Activated CD4-positive, alpha-beta memory T cell treated with anti-CD3 and anti-CD28 coated beads for 36 hours (primary cell): ENCODE measurements at regions of chr10 and their contacts with region 1.

Region 1: DNA sequence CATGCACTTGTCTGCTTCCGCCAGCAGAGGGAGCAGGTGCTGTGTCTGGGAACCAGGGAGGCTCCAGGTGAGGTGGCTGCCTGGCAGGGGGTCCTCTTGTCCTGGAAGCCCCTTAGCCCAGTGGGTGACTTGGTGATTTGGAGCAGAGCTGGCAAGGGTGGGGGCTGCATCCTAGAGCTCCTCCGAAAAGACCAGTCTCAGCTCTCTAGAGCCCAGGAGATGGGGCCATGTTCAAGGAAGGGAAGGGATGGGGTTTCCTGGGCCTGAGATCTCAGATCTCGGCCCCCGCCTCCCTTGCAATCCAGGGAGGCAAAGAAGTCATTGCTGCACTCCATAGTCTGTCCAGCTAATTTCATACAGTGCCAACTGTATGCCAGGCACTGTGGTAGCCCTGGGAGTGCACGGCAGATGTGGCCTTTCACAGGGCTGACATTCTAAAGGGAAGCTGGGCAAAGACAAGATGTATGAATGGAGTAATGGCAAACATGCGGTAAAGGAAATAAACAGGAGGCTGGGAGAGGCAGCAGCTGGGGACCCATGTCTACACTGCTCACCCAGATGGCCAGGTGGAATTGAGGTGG is 20.4 kb upstream of the SFRP5 start:
- DNase-seq: peak; percentile 81
- H3K4me3 Mint-ChIP-seq: no peak overlapping the region
- H3K27ac Mint-ChIP-seq: no peak overlapping the region
- H3K4me1 Mint-ChIP-seq: peaks cover 18% of the 10 kb centered on the region
- H3K27me3 Mint-ChIP-seq: peaks cover 5% of the 10 kb centered on the region

Region 2: DNA sequence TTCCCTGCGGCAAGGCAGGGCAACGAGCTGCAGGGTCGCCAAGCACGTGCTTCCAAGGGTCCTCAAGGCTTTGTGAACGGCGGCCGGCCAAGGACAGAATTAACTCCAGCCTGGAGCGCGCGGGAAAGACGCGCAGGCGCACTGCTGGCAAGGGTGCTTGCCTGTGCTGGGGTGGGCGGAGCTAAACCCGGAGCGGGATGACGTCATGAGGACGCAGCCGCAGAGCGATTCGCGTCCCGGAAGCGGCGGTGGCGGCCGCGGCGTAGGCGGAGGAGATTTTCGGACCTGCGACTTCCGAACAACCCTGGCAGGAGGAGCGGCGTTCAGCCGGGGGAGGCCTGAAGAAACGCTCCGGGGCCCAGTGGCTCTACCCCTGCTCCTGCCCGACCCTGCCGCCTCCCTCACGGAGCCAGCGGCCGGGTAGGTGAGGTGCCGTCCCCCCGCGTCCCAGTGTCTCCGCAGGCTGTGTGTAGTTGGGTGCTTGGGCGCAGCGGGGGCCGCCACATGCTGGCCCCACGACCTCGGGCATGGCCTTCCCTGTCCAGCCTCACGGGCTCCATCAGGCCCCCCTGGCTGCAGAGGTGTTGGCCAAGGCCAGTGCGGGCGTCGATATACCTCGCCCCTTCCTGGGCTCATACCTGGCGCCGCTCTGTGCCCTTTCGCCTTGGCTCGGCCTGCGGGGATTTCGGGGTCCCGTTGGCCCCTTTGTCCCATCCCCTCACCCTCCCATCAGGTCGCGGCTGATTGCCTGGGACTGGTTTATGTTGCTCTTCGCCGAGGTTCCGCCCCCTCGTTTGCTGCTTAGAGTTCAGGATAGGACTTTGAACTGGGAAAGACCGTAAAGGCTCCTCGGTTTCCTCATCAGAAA is 55.1 kb before region 1 on chr10 and contains the start of gene ZFYVE27:
- CTCF ChIA-PET with region 1: no interaction called
- POLR2A ChIA-PET with region 1: no interaction called
- intact Hi-C with region 1: loop called (anchors 1 kb)
- DNase-seq: peak; percentile 98
- H3K4me3 Mint-ChIP-seq: peak within 1 kb of the TSS; percentile 95
- H3K27ac Mint-ChIP-seq: peak within 1 kb of the TSS; percentile 89
- H3K4me1 Mint-ChIP-seq: peaks cover 41% of the 10 kb centered on the region
- H3K27me3 Mint-ChIP-seq: no peaks in the 10 kb centered on the region
- total RNA-seq, gene ZFYVE27: 20.9 to 22.8 TPM

Region 3: DNA sequence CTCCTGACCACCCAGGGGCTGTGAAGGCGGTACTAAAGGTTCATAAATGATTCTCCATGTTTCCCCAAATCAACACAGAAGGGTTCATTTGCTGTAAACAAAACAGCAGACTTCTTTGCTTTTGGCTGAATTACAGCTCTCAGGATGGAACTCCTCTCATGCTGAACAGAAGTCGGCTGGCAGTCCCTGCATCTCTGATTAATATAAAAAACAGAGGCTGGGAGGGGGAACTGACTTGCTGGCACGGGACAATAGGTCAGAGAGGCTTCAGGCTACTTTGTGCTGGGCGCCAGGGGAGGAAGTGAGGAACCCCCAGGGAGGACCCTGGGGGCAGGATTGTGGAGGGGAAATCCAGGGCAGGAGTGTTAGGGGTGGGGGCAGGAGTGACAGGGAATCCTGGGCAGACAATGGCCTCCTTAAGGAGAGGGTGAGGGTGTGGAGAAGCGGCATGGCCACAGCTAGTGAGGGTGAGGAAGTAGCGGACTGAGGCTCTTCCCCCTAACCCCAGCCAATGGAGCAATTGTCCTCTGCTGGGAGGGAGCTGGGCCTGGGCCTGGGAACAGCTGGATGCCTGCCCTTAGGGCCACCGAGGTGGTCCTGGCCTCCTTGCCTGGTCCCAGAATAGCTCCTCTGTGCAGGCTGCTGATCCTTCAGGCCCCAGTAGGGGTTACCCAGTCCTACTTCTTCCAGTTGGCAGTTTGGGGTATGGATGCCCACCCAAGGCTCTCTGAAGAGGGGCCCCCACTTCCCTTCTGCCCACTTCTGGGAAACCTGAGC is 11.2 kb before region 1 on chr10:
- CTCF ChIA-PET with region 1: interaction called, 20 read pairs
- POLR2A ChIA-PET with region 1: no interaction called
- intact Hi-C with region 1: no loop called
- DNase-seq: no peak
- H3K4me3 Mint-ChIP-seq: no peak overlapping the region
- H3K27ac Mint-ChIP-seq: no peak overlapping the region
- H3K4me1 Mint-ChIP-seq: peaks cover 19% of the 10 kb centered on the region
- H3K27me3 Mint-ChIP-seq: no peaks in the 10 kb centered on the region

Region 4: DNA sequence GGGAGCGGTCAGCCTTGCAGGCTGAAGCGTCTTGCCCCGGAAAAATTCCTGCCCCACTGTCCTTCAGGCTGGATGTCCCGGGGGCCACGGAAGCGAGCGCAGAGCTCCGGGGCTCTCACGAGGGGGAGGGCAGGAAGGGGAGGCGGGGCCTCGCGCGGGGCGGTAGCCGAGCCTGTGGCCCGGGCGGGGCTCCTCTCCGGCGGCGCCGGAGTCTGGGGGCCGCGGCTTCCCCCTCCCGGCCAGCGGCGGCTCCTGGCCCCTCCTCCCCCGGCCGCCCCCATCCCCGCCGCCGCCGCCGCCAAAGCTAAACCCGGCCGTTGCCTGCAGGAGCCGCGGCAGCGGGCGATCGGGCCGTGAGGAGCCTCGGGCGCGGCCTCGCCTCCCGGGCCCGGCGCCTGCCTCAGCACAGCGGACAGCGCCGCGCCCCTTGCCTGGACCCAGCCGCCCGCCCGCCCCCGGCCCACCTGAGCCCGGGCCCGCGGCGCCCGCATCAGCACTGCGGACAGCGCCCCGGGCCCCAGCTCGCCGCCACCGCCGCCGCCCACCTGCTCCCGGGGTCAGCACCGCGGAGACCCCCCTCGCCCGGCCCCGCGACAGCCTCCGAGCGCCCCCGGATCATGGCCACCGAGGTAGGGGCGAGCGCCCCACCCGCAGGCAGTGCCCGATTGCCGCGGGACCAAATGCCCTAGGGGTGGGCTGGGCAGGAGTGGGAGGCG is 57.6 kb after region 1 on chr10 and contains the start of gene GOLGA7B:
- CTCF ChIA-PET with region 1: interaction called, 9 read pairs
- POLR2A ChIA-PET with region 1: no interaction called
- intact Hi-C with region 1: loop called (anchors 5 kb)
- DNase-seq: peak; percentile 68
- H3K4me3 Mint-ChIP-seq: peak within 1 kb of the TSS; percentile 73
- H3K27ac Mint-ChIP-seq: peak within 1 kb of the TSS; percentile 9
- H3K4me1 Mint-ChIP-seq: peaks cover 37% of the 10 kb centered on the region
- H3K27me3 Mint-ChIP-seq: no peaks in the 10 kb centered on the region
- total RNA-seq, gene GOLGA7B: 0.86 to 0.87 TPM

Region 5: GRCh38 chr10:97869091-97870042 is 77.1 kb after region 1 on chr10:
- CTCF ChIA-PET with region 1: interaction called, 246 read pairs
- POLR2A ChIA-PET with region 1: no interaction called
- intact Hi-C with region 1: loop called (anchors 1 kb)
- DNase-seq: peak; percentile 92
- H3K4me3 Mint-ChIP-seq: no peak overlapping the region
- H3K27ac Mint-ChIP-seq: no peak overlapping the region
- H3K4me1 Mint-ChIP-seq: peaks cover 12% of the 10 kb centered on the region
- H3K27me3 Mint-ChIP-seq: no peaks in the 10 kb centered on the region

Region 6: DNA sequence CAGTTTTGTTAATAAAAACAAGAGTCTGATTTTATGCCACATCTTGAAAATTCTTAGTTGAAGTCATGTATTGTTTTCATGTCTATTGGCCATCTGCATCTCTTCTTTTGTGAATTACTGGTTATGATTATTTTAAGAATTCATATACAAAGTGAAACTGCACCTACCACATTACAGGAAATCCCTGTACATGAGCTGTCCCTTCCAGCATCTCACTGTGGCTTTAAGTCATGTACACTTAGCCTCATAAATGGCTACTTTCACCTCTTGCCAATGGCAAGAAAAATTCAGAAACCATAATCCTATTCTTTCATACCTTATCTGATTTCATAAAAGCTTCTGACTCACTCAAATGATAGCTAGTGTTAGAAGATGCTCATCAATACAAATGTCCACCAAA is 189.6 kb after region 1 on chr10:
- CTCF ChIA-PET with region 1: no interaction called
- POLR2A ChIA-PET with region 1: no interaction called
- intact Hi-C with region 1: no loop called
- DNase-seq: no peak
- H3K4me3 Mint-ChIP-seq: no peak overlapping the region
- H3K27ac Mint-ChIP-seq: no peak overlapping the region
- H3K4me1 Mint-ChIP-seq: no peaks in the 10 kb centered on the region
- H3K27me3 Mint-ChIP-seq: peaks cover 35% of the 10 kb centered on the region

Region 7: DNA sequence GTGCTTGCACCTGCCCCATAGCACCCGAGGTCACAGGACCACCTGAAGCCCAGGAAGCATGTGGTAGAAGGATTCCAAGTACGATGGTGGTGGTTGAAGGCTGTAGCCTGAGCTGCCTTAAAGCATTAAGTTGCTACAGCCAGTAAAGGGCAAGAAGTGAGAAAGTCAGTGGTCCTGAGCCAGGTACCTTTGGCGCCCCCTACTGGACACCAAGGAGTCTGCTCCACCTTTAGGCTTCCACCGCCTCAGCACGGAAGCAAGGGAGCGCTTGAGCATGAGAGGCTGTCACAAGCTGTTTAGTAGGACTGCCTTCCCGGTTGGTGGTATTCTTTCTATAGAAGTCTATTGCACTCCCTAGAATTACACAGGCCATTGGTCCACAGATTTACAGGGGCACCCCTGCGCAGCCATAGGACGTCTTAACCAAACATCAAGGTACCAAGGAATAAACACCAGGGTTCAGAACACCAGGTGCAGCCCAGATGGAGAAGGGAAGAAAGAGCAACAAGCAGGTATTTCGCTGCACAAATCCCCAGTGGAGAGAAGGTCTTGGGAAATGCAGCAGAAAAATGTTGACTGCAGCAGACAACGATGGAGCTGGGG is 236.0 kb after region 1 on chr10:
- CTCF ChIA-PET with region 1: no interaction called
- POLR2A ChIA-PET with region 1: no interaction called
- intact Hi-C with region 1: loop called (anchors 10 kb)
- DNase-seq: peak; percentile 74
- H3K4me3 Mint-ChIP-seq: no peak overlapping the region
- H3K27ac Mint-ChIP-seq: no peak overlapping the region
- H3K4me1 Mint-ChIP-seq: peaks cover 4% of the 10 kb centered on the region
- H3K27me3 Mint-ChIP-seq: peaks cover 50% of the 10 kb centered on the region

Region 8: DNA sequence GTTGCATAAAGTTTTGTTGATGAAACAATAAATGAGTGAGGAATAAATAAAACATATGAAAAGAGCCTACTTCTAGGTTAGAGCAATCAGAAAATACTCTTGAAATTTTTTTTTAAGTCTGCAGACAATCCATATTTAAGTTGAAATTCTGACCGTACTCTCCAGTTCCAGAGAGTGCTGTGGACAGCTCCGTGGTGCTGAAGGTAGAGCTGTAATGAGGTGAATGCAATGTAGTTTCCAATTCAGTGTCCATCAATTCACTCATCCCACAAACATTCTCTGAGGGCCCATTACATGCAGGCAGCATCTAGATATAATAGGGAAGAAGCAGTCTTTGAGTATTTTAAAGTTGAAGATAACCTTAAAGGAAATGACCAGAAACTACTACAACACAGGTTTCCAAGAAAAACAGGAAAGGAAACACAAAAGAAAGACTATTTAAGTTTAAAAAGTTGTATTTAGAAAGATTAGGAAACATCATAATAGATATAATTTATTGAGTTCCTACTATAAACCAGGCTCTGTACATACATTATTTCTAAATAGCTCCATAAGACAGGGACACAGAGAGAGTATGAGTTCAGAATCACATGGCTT is 282.2 kb after region 1 on chr10:
- CTCF ChIA-PET with region 1: no interaction called
- POLR2A ChIA-PET with region 1: no interaction called
- intact Hi-C with region 1: no loop called
- DNase-seq: peak; percentile 14
- H3K4me3 Mint-ChIP-seq: no peak overlapping the region
- H3K27ac Mint-ChIP-seq: no peak overlapping the region
- H3K4me1 Mint-ChIP-seq: no peaks in the 10 kb centered on the region
- H3K27me3 Mint-ChIP-seq: peaks cover 17% of the 10 kb centered on the region